Left cardiac atrium (tissue), 4 donors: ENCODE measurements at regions of chr10 and their contacts with region 1.

Region 1: DNA sequence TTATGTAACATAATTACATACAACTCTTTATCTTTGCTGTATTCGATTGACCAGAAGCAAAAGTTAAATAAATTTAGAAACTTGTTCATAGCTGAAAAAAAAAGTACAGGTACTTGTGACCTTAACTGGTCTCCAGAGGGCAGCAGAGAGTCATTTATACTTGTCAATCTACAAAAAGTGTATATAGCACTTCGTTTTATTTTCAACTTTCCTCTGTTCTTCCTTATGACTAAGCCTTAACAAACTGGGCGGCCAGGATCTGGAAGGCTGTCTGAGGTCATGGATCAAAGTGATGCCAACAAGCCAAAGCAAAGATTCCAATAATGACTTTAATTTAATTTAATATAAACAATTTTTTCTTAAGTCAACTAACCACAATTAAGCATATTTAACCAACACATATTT is 29.8 kb downstream of the C10orf67 start:
- DNase-seq: no peak
- ATAC-seq: peak; percentile 59 to 82

Region 2: DNA sequence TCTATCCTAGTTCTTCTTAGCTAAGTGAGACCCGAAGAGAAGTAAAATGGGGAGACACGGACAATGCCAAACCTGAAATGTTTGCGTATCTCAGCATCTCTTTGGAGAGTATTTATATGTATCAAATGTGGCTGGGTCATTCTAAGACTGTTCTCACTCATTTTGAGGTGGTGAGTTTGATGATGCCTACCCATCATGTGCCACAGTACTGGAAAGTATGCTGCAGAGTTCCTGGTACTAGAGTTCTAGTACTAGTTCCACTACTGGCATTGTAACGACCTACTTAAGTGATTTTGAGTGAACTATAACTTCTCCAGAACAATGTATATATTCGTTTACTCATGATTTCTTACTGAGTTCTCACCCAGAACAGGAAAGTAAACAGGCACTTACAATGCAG is 345.1 kb before region 1 on chr10:
- intact Hi-C with region 1: no loop called
- DNase-seq: no peak
- ATAC-seq: no peak

Region 3: GRCh38 chr10:23525406-23525805 is 210.6 kb after region 1 on chr10:
- intact Hi-C with region 1: loop called (anchors 5 kb)
- DNase-seq: no peak
- ATAC-seq: peak; percentile 73 to 77

Region 4: DNA sequence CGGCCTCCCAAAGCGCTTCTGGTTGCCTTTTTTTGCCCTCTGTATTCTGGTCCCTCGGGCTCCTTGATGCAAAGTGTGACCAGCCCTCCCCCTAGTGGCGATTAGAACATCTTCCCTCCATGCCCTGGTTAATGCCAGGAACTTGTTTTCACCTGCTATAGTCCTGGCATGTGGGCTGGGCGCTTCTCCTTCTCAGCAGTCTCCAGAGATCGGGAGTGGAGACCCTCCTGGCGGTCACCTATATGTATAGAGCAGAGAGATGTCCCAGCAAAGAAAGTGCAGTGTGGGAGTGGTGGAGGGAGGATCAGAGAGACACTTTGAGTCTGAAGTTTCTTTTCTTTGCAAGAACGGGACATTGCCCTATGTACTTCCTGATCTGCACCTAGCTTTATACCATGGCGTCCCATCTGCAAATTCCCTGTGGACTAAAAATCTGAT is 388.2 kb after region 1 on chr10:
- intact Hi-C with region 1: loop called in 1 of 2 experiments (anchors 5 kb)
- DNase-seq: peak; percentile 40
- ATAC-seq: peak; percentile 59 to 80